PC-9 (cell line): ENCODE measurements at regions of chr4 and their contacts with region 1.

Region 1: DNA sequence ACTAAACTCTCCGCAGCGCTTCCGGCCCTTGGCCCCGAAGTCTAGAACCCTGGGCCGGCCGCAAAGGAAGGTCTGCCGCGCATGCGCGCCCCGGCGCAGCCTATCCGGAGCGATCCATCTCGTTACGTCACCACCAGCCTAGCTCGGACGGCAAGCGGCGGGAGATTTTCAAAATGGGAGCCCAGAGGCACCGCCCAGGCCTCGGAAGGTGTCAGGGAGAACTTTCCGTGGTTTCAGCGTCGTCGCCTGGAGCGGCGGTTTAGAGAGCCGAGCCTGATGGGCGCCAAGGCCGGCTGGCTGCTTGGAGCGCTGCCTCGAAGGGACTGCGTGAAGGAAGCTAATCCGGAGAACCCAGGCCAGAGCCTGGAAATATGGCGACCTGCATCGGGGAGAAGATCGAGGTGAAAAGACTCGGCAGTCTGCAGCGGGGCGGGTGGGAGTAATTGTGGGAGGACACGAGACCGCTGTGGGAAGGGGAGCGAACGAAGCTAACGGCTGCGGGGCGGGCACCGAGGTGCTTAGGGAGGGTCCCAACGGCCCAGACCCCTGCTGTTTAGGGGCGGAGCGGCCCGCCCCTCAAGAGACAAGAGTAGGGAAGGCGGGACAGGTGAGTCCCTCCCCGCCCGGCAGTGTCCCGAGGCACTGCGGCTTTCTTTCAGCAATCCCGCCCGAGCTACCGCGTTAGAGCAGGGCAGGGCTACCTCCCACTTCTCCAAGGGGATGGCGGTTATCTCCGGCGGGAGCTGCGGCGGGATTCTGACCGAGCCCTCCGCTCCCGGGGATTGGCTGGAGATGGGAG is at the start of gene PLK4:
- DNase-seq: peak; percentile 73 to 93
- H3K4me3 ChIP-seq: peak within 1 kb of the TSS; percentile 83
- H3K27ac ChIP-seq: peak within 1 kb of the TSS; percentile 73
- H3K4me1 ChIP-seq: peaks cover 15% of the 10 kb centered on the region; the same call in 1 of the 2 replicates
- H3K27me3 ChIP-seq: no peaks in the 10 kb centered on the region
- CTCF ChIP-seq: no peak
- total RNA-seq, gene PLK4: 23.3 and 25.7 TPM in 2 replicates

Region 2: GRCh38 chr4:127622921-127623656 is 257.9 kb before region 1 on chr4:
- CTCF ChIA-PET with region 1: interaction called, 4 read pairs
- POLR2A ChIA-PET with region 1: no interaction called
- intact Hi-C with region 1: loop called (anchors 10 kb)
- DNase-seq: peak; percentile 60 to 69
- H3K4me3 ChIP-seq: peak overlapping the region; percentile 62
- H3K27ac ChIP-seq: no peak overlapping the region
- H3K4me1 ChIP-seq: no peaks in the 10 kb centered on the region
- H3K27me3 ChIP-seq: 0 out of 2 replicates have a peak, but pooled peaks cover 6% of the 10 kb centered on the region
- CTCF ChIP-seq: peak; percentile 61

Region 3: DNA sequence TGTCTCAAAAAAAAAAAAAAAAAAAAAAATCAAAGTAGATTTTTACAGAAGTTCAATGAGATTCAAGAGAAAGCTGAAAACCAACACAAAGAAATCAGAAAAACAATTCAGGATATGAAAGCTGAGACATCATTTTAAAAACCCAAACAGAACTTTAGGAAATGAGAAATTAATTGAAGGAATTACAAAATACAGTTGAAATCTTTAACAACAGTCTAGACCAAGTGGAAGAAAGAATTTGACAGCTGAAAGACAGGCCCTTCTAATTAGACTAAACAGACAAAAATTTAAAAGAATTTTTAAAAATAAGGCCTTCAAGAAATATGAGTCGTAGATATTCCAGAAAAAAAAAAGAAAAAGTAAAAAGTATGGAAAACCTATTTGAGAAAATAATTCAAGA is 34.2 kb before region 1 on chr4:
- CTCF ChIA-PET with region 1: no interaction called
- POLR2A ChIA-PET with region 1: no interaction called
- intact Hi-C with region 1: no loop called
- DNase-seq: no peak
- H3K4me3 ChIP-seq: no peak overlapping the region
- H3K27ac ChIP-seq: no peak overlapping the region
- H3K4me1 ChIP-seq: no peaks in the 10 kb centered on the region
- H3K27me3 ChIP-seq: no peaks in the 10 kb centered on the region
- CTCF ChIP-seq: no peak

Region 4: GRCh38 chr4:127856813-127857447 is 24.0 kb before region 1 on chr4:
- CTCF ChIA-PET with region 1: no interaction called
- POLR2A ChIA-PET with region 1: no interaction called
- intact Hi-C with region 1: loop called (anchors 1 kb)
- DNase-seq: peak; percentile 59 to 96
- H3K4me3 ChIP-seq: 0 out of 2 replicates have a peak overlapping the region, but pooled peaks have one; percentile 0
- H3K27ac ChIP-seq: peak overlapping the region; percentile 78
- H3K4me1 ChIP-seq: peaks cover 23% of the 10 kb centered on the region
- H3K27me3 ChIP-seq: no peaks in the 10 kb centered on the region
- CTCF ChIP-seq: no peak

Region 5: DNA sequence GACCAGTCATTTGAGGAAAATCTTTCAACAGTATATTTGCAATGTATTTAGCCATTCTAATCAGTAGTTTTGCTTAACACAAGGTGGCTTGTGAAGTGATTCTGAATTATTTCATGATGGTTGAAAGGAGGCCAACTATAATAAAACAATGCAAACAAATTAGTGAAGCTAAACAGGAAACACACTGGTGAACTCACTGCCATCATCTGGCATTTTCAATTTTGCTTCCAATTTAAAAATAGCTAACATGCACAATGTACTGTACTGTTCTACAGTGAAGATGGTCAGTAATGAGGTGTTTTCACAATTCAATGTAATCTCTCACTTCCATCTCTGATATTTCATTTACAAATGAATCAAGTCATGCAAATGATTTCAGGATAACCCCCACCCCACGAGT is 375.6 kb after region 1 on chr4:
- CTCF ChIA-PET with region 1: no interaction called
- POLR2A ChIA-PET with region 1: no interaction called
- intact Hi-C with region 1: no loop called
- DNase-seq: no peak
- H3K4me3 ChIP-seq: no peak overlapping the region
- H3K27ac ChIP-seq: no peak overlapping the region
- H3K4me1 ChIP-seq: no peaks in the 10 kb centered on the region
- H3K27me3 ChIP-seq: no peaks in the 10 kb centered on the region
- CTCF ChIP-seq: no peak